ENCODE measurements at regions of chr4 and their contacts with region 1.

Region 1: GRCh38 chr4:101020956-101021355 is 326.4 kb downstream of the PPP3CA start:
- DNase-seq: peak in 2 of 9 experiments; percentile 59 to 73
- ATAC-seq: peak; percentile 72
- H3K4me3 ChIP-seq: no peak overlapping the region
- H3K4me3 Mint-ChIP-seq: peak overlapping the region; percentile 47
- H3K27ac ChIP-seq: peak overlapping the region; percentile 15 to 56
- H3K27ac Mint-ChIP-seq: peak overlapping the region; percentile 90
- H3K4me1 ChIP-seq: peaks cover 29% of the 10 kb centered on the region
- H3K4me1 Mint-ChIP-seq: peaks cover 35% of the 10 kb centered on the region
- H3K27me3 ChIP-seq: no peaks in the 10 kb centered on the region
- H3K27me3 Mint-ChIP-seq: no peaks in the 10 kb centered on the region
- CTCF ChIP-seq: no peak

Region 2: GRCh38 chr4:101037938-101038413 is 17.0 kb after region 1 on chr4:
- CTCF ChIA-PET with region 1: no interaction called
- POLR2A ChIA-PET with region 1: interaction called, 5 read pairs
- intact Hi-C with region 1: loop called in 1 of 2 experiments (anchors 1 kb)
- DNase-seq: peak in 2 of 9 experiments; percentile 48 to 54
- ATAC-seq: no peak
- H3K4me3 ChIP-seq: no peak overlapping the region
- H3K4me3 Mint-ChIP-seq: no peak overlapping the region
- H3K27ac ChIP-seq: no peak overlapping the region
- H3K27ac Mint-ChIP-seq: peak overlapping the region; percentile 71
- H3K4me1 ChIP-seq: peaks cover 4% of the 10 kb centered on the region
- H3K4me1 Mint-ChIP-seq: peaks cover 23% of the 10 kb centered on the region
- H3K27me3 ChIP-seq: no peaks in the 10 kb centered on the region
- H3K27me3 Mint-ChIP-seq: no peaks in the 10 kb centered on the region
- CTCF ChIP-seq: no peak